ENCODE measurements at regions of chr12 and their contacts with region 1.

Region 1: DNA sequence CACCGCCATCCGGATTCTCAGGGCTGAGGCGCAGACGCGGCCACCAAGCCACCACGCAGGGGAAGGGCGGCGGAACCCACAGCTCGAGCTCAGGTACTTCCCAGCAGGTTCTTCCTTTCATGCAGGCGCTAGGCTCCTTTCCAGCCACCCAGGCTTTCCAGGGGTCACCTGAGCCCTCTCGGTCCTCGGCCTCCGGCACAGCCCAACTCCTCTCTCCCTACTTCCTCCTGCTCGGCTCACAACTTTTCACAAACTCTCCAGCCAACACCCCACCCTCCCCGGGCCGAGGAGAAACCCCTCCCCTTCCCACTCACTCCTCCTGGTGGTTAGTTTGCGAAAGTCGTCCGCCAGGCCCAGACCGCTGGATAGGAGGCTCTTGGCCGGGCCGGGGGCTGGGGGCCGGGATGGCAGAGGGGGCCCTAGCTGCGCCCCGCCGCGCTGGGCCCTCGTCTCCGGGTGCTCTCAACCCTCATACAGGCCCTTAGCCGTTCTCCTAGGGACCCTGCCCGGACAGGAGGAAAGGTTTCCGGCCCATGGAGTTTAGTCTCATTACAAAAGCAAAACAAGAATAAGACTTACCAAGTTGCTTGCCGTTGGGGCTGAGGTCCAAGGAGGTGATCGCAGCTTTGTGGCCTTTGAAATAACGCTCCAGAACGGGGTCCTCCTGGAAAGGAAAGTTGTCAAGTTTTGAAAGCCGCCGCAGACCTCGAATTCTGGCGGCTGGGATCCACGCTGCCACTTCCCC is at the start of gene GALNT4:
- DNase-seq: peak; percentile 74
- H3K4me3 Mint-ChIP-seq: peak within 1 kb of the TSS; percentile 92
- H3K27ac Mint-ChIP-seq: peak within 1 kb of the TSS; percentile 94
- H3K4me1 Mint-ChIP-seq: peaks cover 45% of the 10 kb centered on the region
- H3K27me3 Mint-ChIP-seq: no peaks in the 10 kb centered on the region
- total RNA-seq, gene GALNT4: 8.7 TPM in 2 replicates

Region 2: GRCh38 chr12:88035271-88035906 is 1489.3 kb before region 1 on chr12:
- intact Hi-C with region 1: loop called (anchors 5 kb)
- DNase-seq: peak; percentile 84
- H3K4me3 Mint-ChIP-seq: peak overlapping the region; percentile 98
- H3K27ac Mint-ChIP-seq: peak overlapping the region; percentile 96
- H3K4me1 Mint-ChIP-seq: peaks cover 55% of the 10 kb centered on the region
- H3K27me3 Mint-ChIP-seq: no peaks in the 10 kb centered on the region

Region 3: DNA sequence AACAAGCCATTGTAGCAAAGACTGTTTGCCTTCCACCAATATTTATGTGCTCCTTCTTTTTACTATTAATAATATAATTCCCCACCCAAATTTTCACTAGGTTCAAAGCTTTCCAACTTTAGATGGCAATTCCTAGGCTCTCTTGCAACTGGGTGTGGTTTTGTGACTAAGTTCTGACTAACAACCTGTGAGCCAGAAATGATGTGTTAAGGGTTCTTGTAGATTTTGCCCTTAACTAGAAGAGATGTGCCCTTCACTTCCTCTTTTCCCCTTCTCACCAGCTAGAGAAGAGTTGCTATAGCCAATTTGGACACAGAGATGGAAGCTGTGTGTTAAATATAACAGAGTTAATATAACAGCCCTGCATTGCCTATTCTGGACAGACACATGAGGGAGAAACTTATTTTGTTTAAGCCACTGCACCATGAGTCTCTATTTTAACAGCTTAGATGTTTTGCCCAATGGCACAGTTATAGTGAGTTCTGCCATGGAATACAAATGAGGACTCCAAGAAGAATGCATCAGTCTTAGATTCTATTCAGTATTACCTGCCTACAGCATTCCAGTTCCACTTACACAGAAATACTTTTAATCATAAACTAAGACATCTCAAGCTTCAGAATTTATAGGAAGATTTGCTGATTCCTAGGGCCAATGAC is 388.6 kb before region 1 on chr12:
- intact Hi-C with region 1: loop called (anchors 10 kb)
- DNase-seq: no peak
- H3K4me3 Mint-ChIP-seq: no peak overlapping the region
- H3K27ac Mint-ChIP-seq: peak overlapping the region; percentile 58
- H3K4me1 Mint-ChIP-seq: peaks cover 33% of the 10 kb centered on the region
- H3K27me3 Mint-ChIP-seq: peaks cover 2% of the 10 kb centered on the region

Region 4: DNA sequence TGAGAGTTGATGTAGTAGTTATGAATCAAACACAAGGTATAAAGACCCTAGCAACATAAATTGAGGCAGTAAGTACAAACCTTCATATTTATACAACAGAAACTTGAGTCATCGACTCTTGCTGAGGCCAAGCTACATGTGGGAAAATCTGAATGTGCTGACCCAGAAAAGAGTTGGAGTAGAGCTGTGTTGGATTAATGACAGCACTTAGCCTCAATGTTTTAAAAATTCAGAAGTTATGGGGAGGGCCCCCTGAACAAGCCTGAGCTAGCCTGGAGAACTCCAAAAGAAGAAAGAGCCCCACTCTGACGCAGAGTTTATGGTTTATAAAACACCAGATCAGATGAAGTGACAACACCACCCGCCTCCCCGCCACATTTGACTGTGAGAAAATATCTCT is 272.4 kb before region 1 on chr12:
- intact Hi-C with region 1: loop called (anchors 5 kb)
- DNase-seq: no peak
- H3K4me3 Mint-ChIP-seq: no peak overlapping the region
- H3K27ac Mint-ChIP-seq: peak overlapping the region; percentile 76
- H3K4me1 Mint-ChIP-seq: peaks cover 41% of the 10 kb centered on the region
- H3K27me3 Mint-ChIP-seq: no peaks in the 10 kb centered on the region

Region 5: DNA sequence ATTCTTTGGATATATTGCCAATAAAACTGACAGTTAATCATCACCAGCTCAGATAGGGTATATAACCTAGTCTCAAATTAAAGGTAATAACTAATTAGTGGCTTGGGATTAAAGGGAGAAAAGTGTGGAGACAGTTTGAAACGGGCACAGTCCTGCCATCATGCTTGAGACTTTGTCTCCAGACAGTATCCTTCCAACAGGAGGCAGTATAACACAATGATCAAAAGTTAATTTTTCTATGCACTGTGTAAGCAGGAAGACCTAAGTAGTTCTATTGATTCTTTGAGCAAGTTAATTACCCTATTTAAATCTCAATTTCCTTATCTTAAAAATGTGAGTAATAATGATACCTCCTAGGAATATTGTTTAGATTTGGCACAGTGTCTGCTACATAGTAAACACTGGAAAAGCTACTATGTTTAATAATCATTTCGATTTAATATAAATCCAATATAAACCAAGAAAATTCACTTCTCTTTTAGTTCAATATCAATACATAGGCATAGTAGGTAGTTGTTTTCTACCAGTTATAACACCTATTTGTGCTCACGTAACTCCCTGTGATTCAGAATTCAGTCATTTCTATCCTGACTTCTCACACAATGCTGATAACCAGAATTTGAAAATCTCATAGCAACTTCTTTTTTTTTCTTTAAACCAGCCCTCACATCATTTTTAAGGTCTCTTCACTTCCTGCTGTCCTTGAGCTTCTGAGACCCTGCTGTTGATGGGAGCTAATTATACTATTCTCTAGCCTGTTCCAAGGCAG is 53.8 kb before region 1 on chr12:
- intact Hi-C with region 1: loop called (anchors 1 kb)
- DNase-seq: no peak
- H3K4me3 Mint-ChIP-seq: no peak overlapping the region
- H3K27ac Mint-ChIP-seq: peak overlapping the region; percentile 22
- H3K4me1 Mint-ChIP-seq: peaks cover 76% of the 10 kb centered on the region
- H3K27me3 Mint-ChIP-seq: no peaks in the 10 kb centered on the region

Region 6: DNA sequence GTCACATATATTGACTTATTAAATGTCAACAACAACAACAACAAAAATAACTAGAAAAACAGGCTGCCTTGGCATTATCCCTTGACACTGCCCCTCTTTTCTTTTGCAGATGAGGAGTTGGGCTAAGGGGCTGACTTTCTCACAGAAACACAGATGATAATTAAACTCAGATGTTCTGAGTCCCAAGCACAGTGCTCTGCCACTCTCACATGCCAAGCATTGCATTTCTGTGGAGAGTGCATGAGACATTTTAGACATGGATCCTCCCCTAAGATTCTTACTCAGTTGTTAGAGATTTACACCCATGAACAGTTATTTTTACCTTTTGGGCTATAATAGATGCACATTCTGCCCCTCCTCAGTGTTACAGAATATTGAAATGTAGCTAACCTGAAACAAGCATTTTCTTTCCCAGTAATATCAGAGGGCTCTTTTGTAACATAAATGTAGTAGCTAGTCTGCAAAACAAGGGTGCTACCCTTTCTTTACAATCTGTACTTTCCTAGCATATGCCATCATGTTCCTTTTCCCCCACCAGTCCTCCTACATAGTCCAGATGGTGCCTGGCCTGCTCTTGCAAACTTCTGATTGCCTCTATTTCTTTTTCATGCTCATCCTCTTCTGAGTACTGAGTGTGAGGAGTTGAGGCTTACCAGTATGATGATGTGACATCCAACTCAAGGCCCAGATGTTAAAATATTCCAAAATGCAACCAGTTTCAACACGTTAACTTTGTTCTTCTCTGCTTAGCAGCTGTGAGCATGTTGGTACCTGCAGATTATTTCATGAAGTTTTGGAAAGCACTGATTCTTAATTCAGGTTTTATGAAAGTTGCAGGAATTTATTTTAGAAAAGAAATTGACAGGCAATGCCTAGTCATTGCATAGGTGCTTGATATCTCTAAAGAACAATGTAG is 308.9 kb after region 1 on chr12:
- intact Hi-C with region 1: no loop called
- DNase-seq: no peak
- H3K4me3 Mint-ChIP-seq: no peak overlapping the region
- H3K27ac Mint-ChIP-seq: no peak overlapping the region
- H3K4me1 Mint-ChIP-seq: no peaks in the 10 kb centered on the region
- H3K27me3 Mint-ChIP-seq: peaks cover 4% of the 10 kb centered on the region

Region 7: GRCh38 chr12:89862511-89863179 is 337.9 kb after region 1 on chr12:
- intact Hi-C with region 1: loop called (anchors 5 kb)
- DNase-seq: peak; percentile 44
- H3K4me3 Mint-ChIP-seq: peak overlapping the region; percentile 76
- H3K27ac Mint-ChIP-seq: peak overlapping the region; percentile 95
- H3K4me1 Mint-ChIP-seq: peaks cover 60% of the 10 kb centered on the region
- H3K27me3 Mint-ChIP-seq: no peaks in the 10 kb centered on the region